HEK293 (cell line): ENCODE measurements at regions of chr21 and their contacts with region 1.

Region 1: DNA sequence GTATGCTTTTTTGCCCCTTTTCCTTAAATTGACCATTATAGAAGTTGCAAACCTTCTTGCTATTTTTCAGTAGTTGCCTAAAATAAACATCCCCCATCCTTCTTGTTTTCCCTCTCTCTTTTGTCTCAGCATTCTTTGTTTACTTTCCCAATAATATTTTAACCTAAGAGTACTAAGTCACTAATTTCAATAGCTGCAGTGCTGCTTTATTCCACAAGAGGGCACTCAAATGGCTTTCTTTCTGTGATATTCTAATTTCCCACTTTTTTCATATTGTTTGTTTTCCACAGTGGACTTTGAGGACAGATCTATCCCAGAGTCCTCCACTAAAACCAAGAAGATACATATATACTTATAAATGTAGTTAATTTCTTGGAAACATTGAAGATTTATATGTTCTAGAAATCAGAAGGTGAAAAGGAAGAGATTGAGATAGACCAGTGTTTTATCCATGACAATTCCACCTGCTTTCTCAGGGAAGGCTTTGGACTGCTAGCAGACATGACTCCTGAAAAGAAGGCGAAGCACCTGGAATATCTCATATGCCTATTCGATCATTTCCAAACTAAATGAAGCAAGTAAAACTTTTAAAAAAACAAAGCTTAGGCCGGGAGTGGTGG is 104.8 kb upstream of the GRIK1 start:
- H3K4me3 ChIP-seq: no peak overlapping the region
- H3K27ac ChIP-seq: no peak overlapping the region
- H3K4me1 ChIP-seq: no peaks in the 10 kb centered on the region
- CTCF ChIP-seq: no peak

Region 2: GRCh38 chr21:29914326-29914725 is 130.2 kb before region 1 on chr21:
- CTCF ChIA-PET with region 1: no interaction called
- POLR2A ChIA-PET with region 1: no interaction called
- H3K4me3 ChIP-seq: no peak overlapping the region
- H3K27ac ChIP-seq: no peak overlapping the region
- H3K4me1 ChIP-seq: no peaks in the 10 kb centered on the region
- CTCF ChIP-seq: no peak

Region 3: GRCh38 chr21:29973258-29973657 is 71.3 kb before region 1 on chr21:
- CTCF ChIA-PET with region 1: no interaction called
- POLR2A ChIA-PET with region 1: no interaction called
- H3K4me3 ChIP-seq: no peak overlapping the region
- H3K27ac ChIP-seq: no peak overlapping the region
- H3K4me1 ChIP-seq: no peaks in the 10 kb centered on the region
- CTCF ChIP-seq: no peak

Region 4: GRCh38 chr21:30014886-30015285 is 29.7 kb before region 1 on chr21:
- CTCF ChIA-PET with region 1: no interaction called
- POLR2A ChIA-PET with region 1: no interaction called
- H3K4me3 ChIP-seq: no peak overlapping the region
- H3K27ac ChIP-seq: no peak overlapping the region
- H3K4me1 ChIP-seq: no peaks in the 10 kb centered on the region
- CTCF ChIP-seq: no peak

Region 5: DNA sequence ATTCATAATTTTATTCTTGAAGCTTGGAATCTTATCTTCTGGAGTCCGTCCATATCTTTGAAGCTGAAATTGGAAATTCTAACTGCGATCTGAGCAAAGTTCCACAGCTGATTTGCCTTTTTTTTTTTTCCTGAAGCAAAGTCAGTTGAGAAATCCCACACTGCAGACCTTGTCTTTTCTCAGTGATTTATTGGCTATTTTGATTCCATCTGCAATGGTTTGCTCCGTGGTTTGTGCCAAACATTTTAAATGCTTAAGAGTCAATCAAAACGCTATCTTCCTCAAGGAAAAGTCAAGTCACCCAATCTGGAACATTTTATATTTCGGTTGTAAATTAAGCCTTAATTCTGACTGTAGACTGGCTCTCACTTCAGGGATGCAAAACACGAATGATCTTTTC is 16.6 kb before region 1 on chr21:
- CTCF ChIA-PET with region 1: interaction called, 28 read pairs
- POLR2A ChIA-PET with region 1: no interaction called
- H3K4me3 ChIP-seq: no peak overlapping the region
- H3K27ac ChIP-seq: no peak overlapping the region
- H3K4me1 ChIP-seq: no peaks in the 10 kb centered on the region
- CTCF ChIP-seq: no peak

Region 6: GRCh38 chr21:30058928-30059327 is 14.4 kb after region 1 on chr21:
- CTCF ChIA-PET with region 1: interaction called, 15 read pairs
- POLR2A ChIA-PET with region 1: no interaction called
- H3K4me3 ChIP-seq: no peak overlapping the region
- H3K27ac ChIP-seq: no peak overlapping the region
- H3K4me1 ChIP-seq: no peaks in the 10 kb centered on the region
- CTCF ChIP-seq: no peak